ENCODE measurements at regions of chr3 and their contacts with region 1.

Region 1: GRCh38 chr3:127574880-127575878 is 15.4 kb downstream of the TPRA1 start:
- DNase-seq: peak; percentile 88
- ATAC-seq: peak; percentile 96
- H3K4me3 Mint-ChIP-seq: no peak overlapping the region
- H3K27ac Mint-ChIP-seq: peak overlapping the region; percentile 35
- H3K4me1 Mint-ChIP-seq: peaks cover 13% of the 10 kb centered on the region
- H3K27me3 Mint-ChIP-seq: no peaks in the 10 kb centered on the region

Region 2: DNA sequence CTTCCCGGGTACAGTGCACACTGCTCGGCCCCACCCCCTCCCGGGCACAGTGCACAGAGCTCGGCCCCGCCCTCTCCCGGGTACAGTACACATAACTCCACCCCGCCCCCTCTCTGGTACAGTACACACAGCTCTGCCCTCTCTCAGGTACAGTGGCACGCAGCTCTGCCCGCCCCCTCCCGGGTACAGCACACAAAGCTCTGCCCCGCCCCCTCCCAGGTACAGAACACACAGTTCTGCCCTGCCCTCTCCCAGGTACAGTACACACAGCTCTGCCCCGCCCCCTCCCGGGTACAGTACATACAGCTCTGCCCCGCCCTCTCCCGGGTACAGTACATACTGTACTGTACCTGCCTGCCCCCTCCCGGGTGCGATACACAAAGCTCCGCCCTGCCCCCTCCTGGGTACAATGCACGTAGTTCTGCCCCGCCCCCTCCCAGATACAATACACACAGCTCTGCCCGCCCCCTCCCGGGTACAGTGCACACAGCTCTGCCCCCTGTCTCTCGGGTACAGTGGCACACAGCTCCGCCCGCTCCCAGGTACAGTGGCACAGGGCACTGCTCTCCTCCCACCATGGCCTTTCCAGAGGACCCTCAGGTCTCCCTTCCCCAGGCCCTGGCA is 270.9 kb before region 1 on chr3:
- CTCF ChIA-PET with region 1: no interaction called
- POLR2A ChIA-PET with region 1: no interaction called
- DNase-seq: no peak
- ATAC-seq: no peak
- H3K4me3 Mint-ChIP-seq: no peak overlapping the region
- H3K27ac Mint-ChIP-seq: no peak overlapping the region
- H3K4me1 Mint-ChIP-seq: no peaks in the 10 kb centered on the region
- H3K27me3 Mint-ChIP-seq: peaks cover 6% of the 10 kb centered on the region

Region 3: DNA sequence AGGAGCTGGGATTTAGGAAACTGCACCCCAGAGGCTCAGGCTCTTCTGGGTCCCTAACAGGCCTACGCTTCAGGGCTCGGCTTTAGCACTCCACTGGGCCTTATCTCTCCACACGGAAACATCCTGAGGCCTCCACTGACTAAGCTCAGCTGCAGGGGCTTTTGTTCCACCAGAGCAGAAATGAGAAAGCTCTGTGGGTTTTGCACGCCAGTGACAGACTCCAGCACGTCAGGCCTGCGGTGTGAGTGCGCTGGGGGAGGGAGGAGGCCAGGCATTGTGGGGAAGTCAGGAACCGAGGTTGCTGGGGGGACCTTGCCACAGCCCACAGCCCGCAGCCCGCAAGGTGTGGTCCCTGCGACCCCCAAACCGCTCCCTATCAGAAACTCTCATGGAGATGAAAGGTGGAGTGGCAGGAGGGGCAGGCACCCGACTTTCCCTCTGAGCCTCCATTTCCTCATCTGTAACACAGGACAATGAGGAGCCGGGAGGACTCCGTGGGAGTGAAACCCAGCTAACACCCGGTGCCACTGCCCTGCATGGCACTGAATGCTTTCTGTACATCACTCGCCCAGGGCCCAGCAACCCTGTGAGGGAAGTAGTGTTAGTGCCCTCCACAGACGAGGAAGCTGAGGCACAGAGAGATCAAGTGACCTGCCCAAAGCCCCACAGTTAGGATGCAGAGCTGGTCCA is 91.1 kb before region 1 on chr3:
- CTCF ChIA-PET with region 1: no interaction called
- POLR2A ChIA-PET with region 1: no interaction called
- DNase-seq: peak; percentile 76
- ATAC-seq: peak; percentile 81
- H3K4me3 Mint-ChIP-seq: peak overlapping the region; percentile 34
- H3K27ac Mint-ChIP-seq: peak overlapping the region; percentile 36
- H3K4me1 Mint-ChIP-seq: peaks cover 18% of the 10 kb centered on the region
- H3K27me3 Mint-ChIP-seq: peaks cover 42% of the 10 kb centered on the region

Region 4: GRCh38 chr3:127590593-127591477 is 15.7 kb after region 1 on chr3 and contains the start of gene TPRA1:
- CTCF ChIA-PET with region 1: interaction called, 48 read pairs
- POLR2A ChIA-PET with region 1: interaction called, 4 read pairs
- DNase-seq: peak; percentile 87
- ATAC-seq: peak; percentile 88
- H3K4me3 Mint-ChIP-seq: peak within 1 kb of the TSS; percentile 93
- H3K27ac Mint-ChIP-seq: peak within 1 kb of the TSS; percentile 98
- H3K4me1 Mint-ChIP-seq: peaks cover 31% of the 10 kb centered on the region
- H3K27me3 Mint-ChIP-seq: no peaks in the 10 kb centered on the region
- total RNA-seq, gene TPRA1: 27.0 to 27.9 TPM

Region 5: GRCh38 chr3:127598841-127599570 is 23.8 kb after region 1 on chr3:
- CTCF ChIA-PET with region 1: interaction called, 32 read pairs
- POLR2A ChIA-PET with region 1: interaction called, 7 read pairs
- DNase-seq: no peak
- ATAC-seq: no peak
- H3K4me3 Mint-ChIP-seq: peak overlapping the region; percentile 83
- H3K27ac Mint-ChIP-seq: peak overlapping the region; percentile 89
- H3K4me1 Mint-ChIP-seq: peaks cover 55% of the 10 kb centered on the region
- H3K27me3 Mint-ChIP-seq: no peaks in the 10 kb centered on the region

Region 6: DNA sequence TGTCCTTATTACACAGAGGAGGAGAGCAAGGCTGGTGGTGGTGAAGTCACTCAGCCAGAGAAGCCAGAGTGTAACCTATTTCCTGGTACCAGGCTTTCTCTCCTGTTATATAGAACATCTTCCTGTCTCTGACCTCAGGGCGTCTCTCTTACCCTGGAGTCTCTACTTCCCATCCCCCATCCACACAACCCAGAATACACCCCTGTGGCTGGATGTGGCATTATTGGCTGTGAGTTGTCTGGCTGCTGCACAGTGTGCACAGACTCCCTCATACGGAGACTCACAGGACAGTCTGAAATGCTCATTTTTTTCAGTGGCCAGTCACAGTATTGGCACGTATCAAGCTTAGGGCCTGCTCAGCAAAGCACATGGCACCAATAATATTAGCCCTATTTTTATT is 62.4 kb after region 1 on chr3:
- CTCF ChIA-PET with region 1: interaction called, 11 read pairs
- POLR2A ChIA-PET with region 1: no interaction called
- DNase-seq: peak; percentile 87
- ATAC-seq: peak; percentile 99
- H3K4me3 Mint-ChIP-seq: no peak overlapping the region
- H3K27ac Mint-ChIP-seq: peak overlapping the region; percentile 80
- H3K4me1 Mint-ChIP-seq: peaks cover 30% of the 10 kb centered on the region
- H3K27me3 Mint-ChIP-seq: peaks cover 10% of the 10 kb centered on the region

Region 7: GRCh38 chr3:127831723-127832172 is 256.6 kb after region 1 on chr3:
- CTCF ChIA-PET with region 1: interaction called, 13 read pairs
- POLR2A ChIA-PET with region 1: no interaction called
- DNase-seq: peak; percentile 51
- ATAC-seq: peak; percentile 64
- H3K4me3 Mint-ChIP-seq: no peak overlapping the region
- H3K27ac Mint-ChIP-seq: no peak overlapping the region
- H3K4me1 Mint-ChIP-seq: peaks cover 5% of the 10 kb centered on the region
- H3K27me3 Mint-ChIP-seq: peaks cover 12% of the 10 kb centered on the region

Measured in activated CD8-positive, alpha-beta T cell treated with anti-CD3 and anti-CD28 coated beads, Interleukin-2, amount 10 ng/mL, durations not matched to agents 7 days and 5 days (primary cell).